Right cardiac atrium (tissue), 5 donors: ENCODE measurements at regions of chr5 and their contacts with region 1.

Region 1: GRCh38 chr5:10695055-10695649 is 65.9 kb downstream of the DAP start:
- DNase-seq: peak; percentile 68 to 89 (median 86)
- ATAC-seq: peak; percentile 86 to 90
- H3K4me3 ChIP-seq: no peak overlapping the region
- H3K27ac ChIP-seq: no peak overlapping the region
- H3K4me1 ChIP-seq: no peaks in the 10 kb centered on the region
- H3K27me3 ChIP-seq: no peaks in the 10 kb centered on the region

Region 2: DNA sequence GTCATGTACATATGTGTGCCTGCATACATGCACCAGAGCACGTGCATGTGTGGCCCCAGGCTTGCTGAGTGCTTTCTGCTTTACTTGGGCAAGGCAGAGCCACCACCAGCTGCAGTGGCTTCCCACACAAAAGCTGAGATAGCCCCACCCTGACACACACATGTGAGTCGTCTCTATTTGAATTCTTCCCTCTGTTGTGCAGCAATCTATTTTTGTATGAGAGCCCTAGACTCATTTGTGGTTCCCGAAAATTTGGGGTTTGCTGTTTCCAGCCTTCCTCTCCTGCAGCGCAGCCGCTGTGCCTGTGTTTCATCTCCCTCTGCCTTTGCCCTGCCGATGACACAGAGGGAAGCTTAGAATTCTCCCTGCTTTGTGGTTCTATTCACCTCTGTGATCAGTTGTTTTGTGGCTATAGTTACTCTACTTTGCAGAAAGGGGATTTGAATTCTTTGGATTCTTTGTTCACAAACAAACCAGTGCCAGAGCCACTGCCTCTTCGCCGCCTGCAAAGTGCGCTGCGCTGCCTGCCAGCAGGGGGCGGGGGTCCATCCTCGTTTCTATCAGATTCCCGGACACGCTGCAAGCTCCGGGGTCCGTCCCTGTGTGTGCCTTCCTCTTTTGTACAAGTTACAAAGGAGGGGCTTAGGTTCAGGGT is 161.7 kb after region 1 on chr5:
- intact Hi-C with region 1: loop called in 1 of 4 experiments (anchors 5 kb)
- DNase-seq: peak; percentile 42 to 84 (median 80)
- ATAC-seq: peak; percentile 48 to 63
- H3K4me3 ChIP-seq: no peak overlapping the region
- H3K27ac ChIP-seq: no peak overlapping the region
- H3K4me1 ChIP-seq: no peaks in the 10 kb centered on the region
- H3K27me3 ChIP-seq: no peaks in the 10 kb centered on the region